PC-3 (cell line): ENCODE measurements at regions of chr3 and their contacts with region 1.

Region 1: GRCh38 chr3:64399205-64399800 is 174.0 kb upstream of the PRICKLE2 start:
- DNase-seq: peak; percentile 62
- ATAC-seq: peak; percentile 71; the same call in 1 of the 2 replicates
- H3K4me3 ChIP-seq: no peak overlapping the region
- H3K27ac ChIP-seq: no peak overlapping the region
- H3K4me1 ChIP-seq: no peaks in the 10 kb centered on the region
- H3K27me3 ChIP-seq: no peaks in the 10 kb centered on the region
- CTCF ChIP-seq: peak; percentile 72

Region 2: GRCh38 chr3:64030741-64031140 is 368.6 kb before region 1 on chr3:
- CTCF ChIA-PET with region 1: no interaction called
- POLR2A ChIA-PET with region 1: no interaction called
- intact Hi-C with region 1: loop called (anchors 1 kb)
- DNase-seq: peak; percentile 75
- ATAC-seq: peak; percentile 81
- H3K4me3 ChIP-seq: peak overlapping the region; percentile 35; the same call in 1 of the 2 replicates
- H3K27ac ChIP-seq: peak overlapping the region; percentile 46
- H3K4me1 ChIP-seq: 0 out of 2 replicates have a peak, but pooled peaks cover 4% of the 10 kb centered on the region
- H3K27me3 ChIP-seq: no peaks in the 10 kb centered on the region
- CTCF ChIP-seq: peak; percentile 69

Region 3: DNA sequence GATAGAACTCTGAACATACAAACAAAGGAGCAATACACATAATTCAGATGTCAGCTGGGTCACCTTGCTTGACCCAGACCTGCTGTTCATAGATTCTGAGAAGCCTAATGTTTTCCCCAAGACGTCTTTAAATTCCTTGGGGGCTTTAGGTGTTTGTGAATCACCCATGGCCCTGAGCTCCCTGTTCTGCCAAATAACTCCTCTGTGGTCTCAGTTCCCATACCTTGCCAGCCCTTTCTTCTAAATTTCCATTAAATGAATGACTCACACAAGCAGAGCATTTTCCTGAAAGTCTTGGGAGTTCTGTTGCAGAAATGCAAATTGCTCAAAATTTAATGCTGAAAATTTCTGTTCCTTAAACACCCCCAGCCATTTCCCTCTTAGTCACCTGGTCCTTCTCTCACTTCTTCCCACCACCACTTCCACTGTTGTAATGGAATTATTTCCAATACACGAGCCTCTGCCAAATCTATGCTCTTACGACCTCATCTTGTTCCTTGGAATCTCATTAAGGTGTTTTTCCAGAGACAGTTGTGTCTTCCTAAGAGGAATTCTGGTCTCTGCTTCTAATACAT is 342.6 kb before region 1 on chr3:
- CTCF ChIA-PET with region 1: no interaction called
- POLR2A ChIA-PET with region 1: no interaction called
- intact Hi-C with region 1: no loop called
- DNase-seq: peak; percentile 60
- ATAC-seq: peak; percentile 77
- H3K4me3 ChIP-seq: no peak overlapping the region
- H3K27ac ChIP-seq: peak overlapping the region; percentile 84
- H3K4me1 ChIP-seq: peaks cover 25% of the 10 kb centered on the region
- H3K27me3 ChIP-seq: no peaks in the 10 kb centered on the region
- CTCF ChIP-seq: no peak

Region 4: DNA sequence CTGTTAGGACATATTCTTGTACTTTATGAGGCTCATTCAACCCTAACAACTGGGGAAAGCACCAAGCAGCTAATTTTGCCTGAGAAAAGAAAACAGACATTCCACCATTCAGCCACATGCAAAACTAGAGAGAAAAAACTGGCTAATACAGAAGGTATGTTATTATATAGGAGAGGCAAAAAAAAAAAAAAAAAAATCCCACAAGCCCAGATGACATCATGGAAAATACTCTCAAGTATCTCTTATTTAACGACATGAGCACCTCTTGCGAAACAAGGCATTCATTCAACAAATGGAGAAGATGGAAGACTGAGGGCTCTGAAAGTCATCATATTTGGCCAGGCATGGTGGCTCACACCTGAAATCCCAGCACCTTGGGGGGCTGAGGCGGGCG is 235.6 kb before region 1 on chr3:
- CTCF ChIA-PET with region 1: no interaction called
- POLR2A ChIA-PET with region 1: no interaction called
- intact Hi-C with region 1: loop called (anchors 5 kb)
- DNase-seq: peak; percentile 62
- ATAC-seq: no peak
- H3K4me3 ChIP-seq: no peak overlapping the region
- H3K27ac ChIP-seq: peak overlapping the region; percentile 76
- H3K4me1 ChIP-seq: peaks cover 49% of the 10 kb centered on the region
- H3K27me3 ChIP-seq: no peaks in the 10 kb centered on the region
- CTCF ChIP-seq: no peak

Region 5: GRCh38 chr3:64244011-64244942 is 155.0 kb before region 1 on chr3:
- CTCF ChIA-PET with region 1: interaction called, 4 read pairs
- POLR2A ChIA-PET with region 1: no interaction called
- intact Hi-C with region 1: loop called (anchors 2 kb)
- DNase-seq: peak; percentile 40
- ATAC-seq: peak; percentile 43; the same call in 1 of the 2 replicates
- H3K4me3 ChIP-seq: no peak overlapping the region
- H3K27ac ChIP-seq: no peak overlapping the region
- H3K4me1 ChIP-seq: no peaks in the 10 kb centered on the region; the same call in 1 of the 2 replicates
- H3K27me3 ChIP-seq: no peaks in the 10 kb centered on the region
- CTCF ChIP-seq: peak; percentile 59

Region 6: GRCh38 chr3:64267721-64268604 is 131.3 kb before region 1 on chr3:
- CTCF ChIA-PET with region 1: no interaction called
- POLR2A ChIA-PET with region 1: no interaction called
- intact Hi-C with region 1: loop called (anchors 5 kb)
- DNase-seq: no peak
- ATAC-seq: no peak
- H3K4me3 ChIP-seq: no peak overlapping the region
- H3K27ac ChIP-seq: no peak overlapping the region
- H3K4me1 ChIP-seq: peaks cover 31% of the 10 kb centered on the region
- H3K27me3 ChIP-seq: no peaks in the 10 kb centered on the region
- CTCF ChIP-seq: no peak

Region 7: DNA sequence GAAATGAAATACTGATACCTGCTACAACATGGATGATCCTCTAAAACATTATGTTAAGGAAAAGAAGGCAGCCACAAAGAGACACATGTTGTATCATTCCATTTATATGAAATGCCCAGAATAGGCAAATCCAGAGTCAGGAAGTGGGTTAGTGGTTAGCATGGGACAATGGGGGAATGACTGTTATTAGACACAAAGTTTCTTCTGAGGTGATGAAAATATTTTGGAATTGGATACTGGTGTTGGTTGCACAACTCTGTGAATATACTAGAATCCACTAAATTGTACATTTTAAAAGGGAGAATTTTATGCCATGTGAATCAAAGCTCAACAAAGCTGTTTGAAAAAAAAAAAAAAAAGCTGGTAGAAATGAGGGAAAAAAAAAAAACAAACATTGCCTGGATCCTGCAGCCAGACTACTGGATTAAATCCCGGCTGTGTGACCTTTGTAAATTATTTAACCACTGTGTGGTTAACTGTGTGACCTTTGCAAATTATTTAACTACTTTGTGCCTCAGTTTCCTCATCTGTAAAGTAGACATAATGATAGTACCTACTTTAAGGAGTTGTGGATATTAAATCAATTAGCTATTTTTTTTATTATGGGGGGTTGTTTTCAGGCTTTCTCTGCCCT is 98.4 kb before region 1 on chr3:
- CTCF ChIA-PET with region 1: no interaction called
- POLR2A ChIA-PET with region 1: no interaction called
- intact Hi-C with region 1: loop called (anchors 10 kb)
- DNase-seq: peak; percentile 24
- ATAC-seq: no peak
- H3K4me3 ChIP-seq: no peak overlapping the region
- H3K27ac ChIP-seq: no peak overlapping the region
- H3K4me1 ChIP-seq: no peaks in the 10 kb centered on the region
- H3K27me3 ChIP-seq: no peaks in the 10 kb centered on the region
- CTCF ChIP-seq: no peak

Region 8: DNA sequence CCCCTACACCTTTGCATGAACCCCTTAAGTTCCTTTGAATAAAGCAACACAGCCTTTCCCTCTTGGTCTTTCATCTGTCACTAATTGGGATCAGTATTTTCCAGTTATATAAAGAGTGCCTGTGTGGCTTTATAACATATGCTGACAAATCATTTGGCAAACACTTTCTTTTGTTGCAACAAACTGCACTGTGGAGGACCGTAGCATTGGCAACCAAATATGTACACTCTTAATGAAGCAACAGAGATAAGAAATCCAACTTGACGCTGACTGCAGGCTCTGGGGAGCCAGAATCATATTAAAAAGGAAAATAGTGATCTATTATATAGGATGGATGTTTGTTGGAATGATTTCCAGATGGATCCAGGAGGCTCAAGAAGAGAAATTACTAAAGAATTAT is 53.9 kb before region 1 on chr3:
- CTCF ChIA-PET with region 1: no interaction called
- POLR2A ChIA-PET with region 1: no interaction called
- intact Hi-C with region 1: loop called (anchors 5 kb)
- DNase-seq: peak; percentile 7
- ATAC-seq: peak; percentile 34; the same call in 1 of the 2 replicates
- H3K4me3 ChIP-seq: no peak overlapping the region
- H3K27ac ChIP-seq: 0 out of 2 replicates have a peak overlapping the region, but pooled peaks have one; percentile 53
- H3K4me1 ChIP-seq: peaks cover 32% of the 10 kb centered on the region
- H3K27me3 ChIP-seq: no peaks in the 10 kb centered on the region
- CTCF ChIP-seq: no peak

Region 9: GRCh38 chr3:64431526-64432091 is 32.3 kb after region 1 on chr3:
- CTCF ChIA-PET with region 1: no interaction called
- POLR2A ChIA-PET with region 1: no interaction called
- intact Hi-C with region 1: no loop called
- DNase-seq: no peak
- ATAC-seq: no peak
- H3K4me3 ChIP-seq: no peak overlapping the region
- H3K27ac ChIP-seq: no peak overlapping the region
- H3K4me1 ChIP-seq: no peaks in the 10 kb centered on the region
- H3K27me3 ChIP-seq: no peaks in the 10 kb centered on the region
- CTCF ChIP-seq: no peak